IMR-90 (cell line): ENCODE measurements at regions of chr13 and their contacts with region 1.

Region 1: GRCh38 chr13:49936085-49936940 is at the start of gene SPRYD7:
- DNase-seq: peak; percentile 97
- ATAC-seq: peak; percentile 100
- H3K4me3 ChIP-seq: peak within 1 kb of the TSS; percentile 74
- H3K27ac ChIP-seq: peak within 1 kb of the TSS; percentile 82
- H3K4me1 ChIP-seq: peaks cover 4% of the 10 kb centered on the region; the same call in 1 of the 2 replicates
- H3K27me3 ChIP-seq: no peaks in the 10 kb centered on the region
- CTCF ChIP-seq: peak; percentile 93
- POLR2A ChIP-seq: peak; percentile 61; the same call in 1 of the 2 replicates
- RAD21 ChIP-seq: peak; percentile 33
- total RNA-seq, gene SPRYD7: 5.6 and 9.7 TPM in 2 replicates

Region 2: GRCh38 chr13:49690992-49691886 is 245.1 kb before region 1 on chr13 and contains the start of gene EBPL:
- CTCF ChIA-PET with region 1: no interaction called
- POLR2A ChIA-PET with region 1: interaction called, 28 read pairs
- dilution Hi-C with region 1: no loop called
- in situ Hi-C with region 1: no loop called
- intact Hi-C with region 1: loop called (anchors 10 kb)
- DNase-seq: peak; percentile 86
- ATAC-seq: peak; percentile 99
- H3K4me3 ChIP-seq: peak within 1 kb of the TSS; percentile 56
- H3K27ac ChIP-seq: peak within 1 kb of the TSS; percentile 67
- H3K4me1 ChIP-seq: 0 out of 2 replicates have a peak, but pooled peaks cover 1% of the 10 kb centered on the region
- H3K27me3 ChIP-seq: no peaks in the 10 kb centered on the region
- CTCF ChIP-seq: no peak
- POLR2A ChIP-seq: no peak
- RAD21 ChIP-seq: no peak
- total RNA-seq, gene EBPL: 57.9 and 78.6 TPM in 2 replicates

Region 3: DNA sequence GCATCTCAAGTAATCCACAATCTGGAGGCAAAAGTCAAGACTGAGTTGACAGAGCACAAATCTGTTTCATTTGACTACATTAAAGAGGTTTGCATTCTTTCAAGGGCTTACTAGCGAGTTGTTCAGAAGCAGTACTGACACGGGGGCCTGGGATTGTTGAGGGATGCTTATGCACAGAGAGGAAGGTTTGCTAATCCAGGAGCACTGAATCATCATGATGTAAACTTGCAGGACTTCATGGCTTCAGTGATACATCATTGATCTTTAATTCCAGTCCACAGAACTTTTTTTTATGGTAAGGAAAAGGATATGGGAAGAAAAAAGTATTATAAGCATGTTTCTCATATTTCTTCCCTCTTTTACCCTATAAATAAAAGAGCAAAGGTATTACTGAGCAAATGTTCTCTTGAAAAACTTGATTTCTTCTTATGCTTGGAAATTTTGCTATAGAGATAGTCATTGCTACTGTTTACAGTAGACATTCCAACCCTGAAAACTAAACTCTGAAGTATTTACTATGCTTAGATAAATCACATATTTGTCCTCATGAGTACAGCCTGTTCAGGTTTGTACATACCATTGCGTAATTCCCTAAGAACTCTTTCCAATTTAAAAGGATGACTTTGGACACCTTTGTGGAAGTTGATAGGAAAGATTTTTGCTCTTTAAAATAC is 78.0 kb before region 1 on chr13:
- CTCF ChIA-PET with region 1: no interaction called
- POLR2A ChIA-PET with region 1: interaction called, 5 read pairs
- dilution Hi-C with region 1: no loop called
- in situ Hi-C with region 1: no loop called
- intact Hi-C with region 1: loop called (anchors 1 kb)
- DNase-seq: peak; percentile 99
- ATAC-seq: peak; percentile 92
- H3K4me3 ChIP-seq: no peak overlapping the region
- H3K27ac ChIP-seq: peak overlapping the region; percentile 92
- H3K4me1 ChIP-seq: peaks cover 6% of the 10 kb centered on the region
- H3K27me3 ChIP-seq: no peaks in the 10 kb centered on the region
- CTCF ChIP-seq: no peak
- POLR2A ChIP-seq: no peak
- RAD21 ChIP-seq: no peak; the same call in 1 of the 2 replicates

Region 4: GRCh38 chr13:49890376-49890775 is 45.9 kb before region 1 on chr13:
- CTCF ChIA-PET with region 1: no interaction called
- POLR2A ChIA-PET with region 1: no interaction called
- dilution Hi-C with region 1: no loop called
- in situ Hi-C with region 1: no loop called
- intact Hi-C with region 1: loop called (anchors 1 kb)
- DNase-seq: no peak
- ATAC-seq: no peak
- H3K4me3 ChIP-seq: no peak overlapping the region
- H3K27ac ChIP-seq: no peak overlapping the region
- H3K4me1 ChIP-seq: no peaks in the 10 kb centered on the region
- H3K27me3 ChIP-seq: no peaks in the 10 kb centered on the region
- CTCF ChIP-seq: no peak
- POLR2A ChIP-seq: no peak
- RAD21 ChIP-seq: no peak